CD14-positive monocyte (primary cell): ENCODE measurements at regions of chrX and their contacts with region 1.

Region 1: DNA sequence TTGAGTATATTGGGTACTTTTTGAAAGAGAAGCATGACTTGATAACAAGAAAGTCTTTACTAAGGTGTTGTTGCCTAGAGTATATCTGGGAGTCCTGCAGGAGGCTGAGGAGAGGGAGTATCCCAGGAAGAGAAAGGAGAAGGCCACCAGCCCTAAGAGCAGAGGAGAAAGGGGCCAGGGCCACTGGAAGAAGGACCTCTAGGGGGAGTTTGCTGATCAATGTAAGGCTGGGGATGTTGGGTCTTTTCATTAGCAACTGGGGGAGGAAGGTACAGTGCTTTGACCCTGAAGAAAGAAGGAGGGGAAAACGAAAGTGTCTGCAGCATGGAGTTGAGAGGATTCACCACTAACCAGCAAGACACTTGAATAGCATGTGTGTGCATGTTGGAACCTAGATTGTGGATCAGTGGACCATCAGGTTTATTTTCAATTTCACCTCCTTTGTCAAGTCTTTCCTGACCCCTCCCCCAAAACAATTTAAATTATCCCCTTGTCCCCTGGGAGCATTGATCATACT is 4.5 kb downstream of the SMIM9 start:
- DNase-seq: no peak
- H3K4me3 ChIP-seq: no peak overlapping the region
- H3K4me3 Mint-ChIP-seq: no peak overlapping the region
- H3K27ac ChIP-seq: no peak overlapping the region
- H3K27ac Mint-ChIP-seq: peak overlapping the region in 1 of 7 donors; percentile 18
- H3K4me1 ChIP-seq: peaks cover 13 to 14% of the 10 kb centered on the region in 2 donors
- H3K4me1 Mint-ChIP-seq: peaks cover 20% of the 10 kb centered on the region
- H3K27me3 ChIP-seq: no peaks in the 10 kb centered on the region
- H3K27me3 Mint-ChIP-seq: peaks cover 0 to 3% (median 0%) of the 10 kb centered on the region in 3 donors
- CTCF ChIP-seq: no peak

Region 2: DNA sequence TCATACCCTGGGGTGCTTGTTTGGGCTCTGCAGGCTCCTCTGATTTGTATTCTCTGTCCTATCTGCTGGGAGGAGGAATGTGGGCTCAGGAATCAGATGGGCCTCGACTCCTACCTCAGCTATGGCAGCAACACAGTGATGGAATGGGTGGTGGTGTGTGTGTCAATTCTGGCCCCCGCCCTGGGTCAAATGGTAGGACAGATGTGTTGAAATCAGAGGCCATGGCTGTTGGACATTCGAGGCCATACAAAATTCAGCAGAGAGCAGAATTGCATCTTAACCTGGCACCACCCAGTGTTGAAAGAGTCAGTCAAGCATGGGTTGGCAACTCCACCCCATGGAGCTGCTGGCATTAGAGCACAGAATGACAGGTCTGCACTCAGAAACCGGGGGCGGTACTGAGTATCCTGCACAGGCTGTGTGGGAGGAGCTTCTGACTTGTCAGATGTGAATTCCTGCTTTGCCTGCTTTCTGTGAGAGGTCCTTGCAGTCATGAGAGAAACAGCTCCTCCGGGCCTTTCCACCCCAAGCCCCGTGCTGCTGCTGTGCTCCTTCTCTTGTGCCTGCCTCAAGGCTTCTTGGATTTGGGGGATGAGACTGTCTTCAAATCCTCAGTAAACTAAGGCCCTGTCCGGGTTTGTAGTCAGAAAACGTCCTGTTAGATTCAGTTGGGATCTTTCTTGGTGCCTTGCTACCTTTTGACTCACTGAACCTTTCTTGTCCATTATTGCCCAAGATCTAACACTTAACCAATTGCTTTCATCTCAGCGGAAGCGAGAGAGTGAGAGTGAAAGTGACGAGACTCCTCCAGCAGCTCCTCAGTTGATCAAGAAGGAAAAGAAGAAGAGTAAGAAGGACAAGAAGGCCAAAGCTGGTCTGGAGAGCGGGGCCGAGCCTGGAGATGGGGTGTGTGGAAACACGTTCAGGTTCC is 54.3 kb before region 1 on chrX:
- intact Hi-C with region 1: loop called (anchors 10 kb)
- DNase-seq: no peak
- H3K4me3 ChIP-seq: no peak overlapping the region
- H3K4me3 Mint-ChIP-seq: no peak overlapping the region
- H3K27ac ChIP-seq: no peak overlapping the region
- H3K27ac Mint-ChIP-seq: peak overlapping the region in 4 of 7 donors; percentile 5 to 57 (median 30)
- H3K4me1 ChIP-seq: peaks cover 0 to 6% of the 10 kb centered on the region in 2 donors
- H3K4me1 Mint-ChIP-seq: peaks cover 3% of the 10 kb centered on the region
- H3K27me3 ChIP-seq: no peaks in the 10 kb centered on the region
- H3K27me3 Mint-ChIP-seq: peaks cover 0 to 2% (median 0%) of the 10 kb centered on the region in 3 donors
- CTCF ChIP-seq: no peak

Region 3: DNA sequence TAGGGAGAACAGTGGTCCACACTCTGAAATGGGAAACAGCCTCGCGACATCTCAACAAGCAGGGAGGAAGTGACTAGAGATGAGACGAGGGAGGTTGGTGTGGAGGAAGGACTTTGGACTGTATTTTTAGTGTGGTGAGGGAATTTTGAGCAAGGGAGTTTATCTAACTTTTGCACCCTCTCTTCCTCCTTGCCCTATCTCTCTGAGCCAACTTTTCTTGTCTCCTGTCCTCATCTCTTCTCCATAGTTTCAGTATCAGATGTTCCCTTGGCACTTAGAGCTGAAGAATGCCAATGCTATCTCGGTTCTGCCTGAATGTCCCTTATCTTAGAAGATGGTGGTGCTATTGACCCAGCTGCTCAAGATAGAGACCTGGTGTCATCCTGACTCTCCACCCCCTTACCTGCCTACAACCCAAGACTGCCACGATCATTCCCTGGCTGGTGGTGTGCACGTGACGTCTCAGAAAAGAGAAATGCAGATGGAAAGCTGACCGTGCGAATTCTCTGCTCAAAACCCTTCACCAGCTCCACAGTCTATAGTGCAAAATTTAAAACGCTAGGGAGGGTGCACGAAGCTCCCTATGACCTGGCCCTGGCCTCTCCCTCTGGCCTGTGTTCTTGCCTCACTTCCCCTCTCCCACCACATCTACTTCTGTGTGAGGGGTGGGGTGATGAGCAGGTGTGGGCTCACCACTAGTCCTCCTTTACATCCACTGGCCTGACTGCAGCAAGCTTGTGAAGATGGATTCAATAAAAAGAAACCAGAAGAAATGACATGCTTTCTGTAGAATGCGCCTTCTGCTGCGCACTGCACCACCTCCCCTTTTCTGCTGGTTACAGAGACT is 45.6 kb before region 1 on chrX:
- intact Hi-C with region 1: loop called (anchors 10 kb)
- DNase-seq: no peak
- H3K4me3 ChIP-seq: no peak overlapping the region
- H3K4me3 Mint-ChIP-seq: peak overlapping the region in 1 of 2 donors; percentile 49
- H3K27ac ChIP-seq: peak overlapping the region in 1 of 2 donors; percentile 37
- H3K27ac Mint-ChIP-seq: peak overlapping the region in 6 of 7 donors; percentile 13 to 81 (median 56)
- H3K4me1 ChIP-seq: peaks cover 23 to 25% of the 10 kb centered on the region in 2 donors
- H3K4me1 Mint-ChIP-seq: peaks cover 27% of the 10 kb centered on the region
- H3K27me3 ChIP-seq: no peaks in the 10 kb centered on the region
- H3K27me3 Mint-ChIP-seq: peaks cover 0 to 2% (median 0%) of the 10 kb centered on the region in 3 donors
- CTCF ChIP-seq: no peak